Activated CD4-positive, alpha-beta T cell treated with anti-CD3 and anti-CD28 coated beads for 36 hours (primary cell): ENCODE measurements at regions of chr6 and their contacts with region 1.

Region 1: DNA sequence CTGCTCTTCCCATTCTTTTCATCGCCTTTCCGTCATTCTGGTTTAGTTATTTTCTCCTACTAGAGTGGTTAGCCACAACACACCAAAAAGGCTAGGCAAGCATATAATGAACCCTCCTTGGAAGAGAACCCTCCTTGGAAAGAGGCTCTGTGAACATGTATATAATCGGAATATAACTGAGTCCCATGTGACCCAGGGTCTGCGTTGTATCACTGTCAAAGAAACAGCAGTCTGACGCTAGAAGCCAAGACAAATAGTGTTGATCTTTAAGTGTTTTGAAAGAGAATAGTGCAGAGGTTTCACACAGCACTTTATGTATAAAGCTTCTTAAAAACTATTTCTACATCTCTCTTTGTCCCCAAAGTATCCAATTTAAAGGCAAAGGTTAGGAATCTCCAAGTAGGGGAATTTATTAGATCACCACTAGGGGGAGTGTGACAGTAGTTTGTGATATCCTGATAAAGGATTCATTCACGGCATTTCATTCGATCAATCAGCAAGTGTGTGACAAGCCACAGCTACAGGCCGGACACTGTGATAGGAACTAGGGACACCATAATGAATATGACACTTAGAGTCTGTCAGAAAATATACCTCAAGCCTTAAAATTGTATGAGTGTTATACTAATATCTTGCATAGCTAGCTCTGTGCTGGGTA is 395.3 kb downstream of the CD109 start:
- DNase-seq: no peak
- ATAC-seq: peak; percentile 39
- H3K4me3 Mint-ChIP-seq: no peak overlapping the region
- H3K27ac Mint-ChIP-seq: no peak overlapping the region
- H3K4me1 Mint-ChIP-seq: no peaks in the 10 kb centered on the region
- H3K27me3 Mint-ChIP-seq: peaks cover 2% of the 10 kb centered on the region

Region 2: DNA sequence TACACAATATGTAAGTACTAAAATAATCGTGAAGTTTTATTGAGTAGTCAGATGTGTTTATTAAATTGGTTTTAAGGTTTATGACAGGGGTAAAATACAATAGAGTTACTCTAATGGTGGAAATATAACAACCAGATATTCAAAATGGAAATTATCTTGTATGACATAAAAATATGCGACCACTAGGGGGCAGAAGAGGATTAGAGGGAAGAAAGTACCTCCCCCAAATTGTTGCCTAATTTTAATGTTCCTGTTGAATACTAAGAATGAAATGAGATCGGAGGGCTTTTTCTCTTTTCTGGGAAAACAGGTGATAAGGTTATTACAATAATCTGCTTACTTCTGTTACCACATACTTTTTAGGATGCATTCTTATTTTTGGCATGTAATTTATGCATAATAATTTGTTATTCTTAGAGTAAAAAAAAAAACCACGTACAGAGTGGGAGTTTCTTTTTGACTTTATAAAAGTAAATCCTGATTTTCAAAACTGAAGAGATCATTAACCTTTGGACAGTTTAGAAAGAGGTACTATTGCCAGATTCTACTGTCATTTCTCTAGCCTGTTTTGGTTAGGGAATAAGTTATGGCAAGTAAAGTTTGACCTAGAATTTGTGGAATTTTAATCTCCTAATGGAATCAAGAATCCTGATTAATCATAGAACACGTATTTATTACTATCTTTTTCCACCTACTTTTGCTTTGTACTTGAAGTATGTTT is 236.1 kb before region 1 on chr6:
- CTCF ChIA-PET with region 1: no interaction called
- POLR2A ChIA-PET with region 1: no interaction called
- intact Hi-C with region 1: loop called in 1 of 2 experiments (anchors 1 kb)
- DNase-seq: no peak
- ATAC-seq: peak; percentile 26
- H3K4me3 Mint-ChIP-seq: no peak overlapping the region
- H3K27ac Mint-ChIP-seq: no peak overlapping the region
- H3K4me1 Mint-ChIP-seq: no peaks in the 10 kb centered on the region
- H3K27me3 Mint-ChIP-seq: no peaks in the 10 kb centered on the region

Region 3: DNA sequence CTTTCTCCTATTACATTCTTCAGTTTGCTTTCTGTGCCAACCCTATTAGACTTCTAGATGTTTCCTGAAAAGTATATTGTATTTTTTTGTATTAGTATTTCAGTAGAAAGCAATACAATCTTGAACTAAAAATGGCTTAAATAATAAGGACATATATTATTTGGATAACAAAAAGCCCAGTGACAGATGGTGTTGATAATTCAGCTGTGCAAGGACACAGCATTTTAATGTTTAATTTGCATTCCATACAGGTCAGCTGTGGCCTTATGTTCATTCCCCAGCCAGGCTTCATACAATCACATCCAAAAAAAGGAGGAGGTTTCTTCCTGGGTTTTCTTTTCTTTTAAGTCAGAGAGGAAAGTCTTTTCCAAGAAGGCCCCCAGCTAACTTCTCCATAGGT is 158.4 kb before region 1 on chr6:
- CTCF ChIA-PET with region 1: no interaction called
- POLR2A ChIA-PET with region 1: no interaction called
- intact Hi-C with region 1: no loop called
- DNase-seq: no peak
- ATAC-seq: no peak
- H3K4me3 Mint-ChIP-seq: no peak overlapping the region
- H3K27ac Mint-ChIP-seq: no peak overlapping the region
- H3K4me1 Mint-ChIP-seq: no peaks in the 10 kb centered on the region
- H3K27me3 Mint-ChIP-seq: no peaks in the 10 kb centered on the region